ENCODE measurements at regions of chr16 and their contacts with region 1.

Region 1: DNA sequence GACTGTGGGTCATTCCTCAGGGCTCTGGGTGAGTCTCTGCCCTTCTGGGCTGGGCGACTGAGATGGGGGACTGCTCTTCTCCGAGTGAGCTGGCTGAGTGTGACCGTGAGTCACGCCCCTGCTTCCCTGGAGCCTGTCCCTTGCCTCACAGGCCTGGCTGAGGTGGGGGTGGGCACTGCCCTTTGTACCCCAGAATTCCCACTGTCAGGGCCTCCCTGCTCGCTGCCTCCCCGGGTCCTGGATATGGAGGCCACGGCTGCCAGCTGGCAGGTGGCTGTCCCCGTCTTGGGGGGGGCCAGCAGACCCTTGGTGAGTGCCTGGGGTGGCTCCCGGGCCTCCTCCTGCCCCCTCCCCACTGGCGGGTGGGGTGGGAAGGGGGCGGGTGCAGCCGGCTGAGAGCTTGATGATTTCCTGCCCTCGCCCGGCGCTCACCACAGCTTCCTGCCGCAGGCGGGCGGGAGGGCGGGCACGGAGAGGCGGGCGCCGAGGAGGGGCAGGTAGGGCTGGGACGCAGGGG is at the start of gene LAT:
- DNase-seq: peak; percentile 48
- CTCF ChIP-seq: no peak

Region 2: DNA sequence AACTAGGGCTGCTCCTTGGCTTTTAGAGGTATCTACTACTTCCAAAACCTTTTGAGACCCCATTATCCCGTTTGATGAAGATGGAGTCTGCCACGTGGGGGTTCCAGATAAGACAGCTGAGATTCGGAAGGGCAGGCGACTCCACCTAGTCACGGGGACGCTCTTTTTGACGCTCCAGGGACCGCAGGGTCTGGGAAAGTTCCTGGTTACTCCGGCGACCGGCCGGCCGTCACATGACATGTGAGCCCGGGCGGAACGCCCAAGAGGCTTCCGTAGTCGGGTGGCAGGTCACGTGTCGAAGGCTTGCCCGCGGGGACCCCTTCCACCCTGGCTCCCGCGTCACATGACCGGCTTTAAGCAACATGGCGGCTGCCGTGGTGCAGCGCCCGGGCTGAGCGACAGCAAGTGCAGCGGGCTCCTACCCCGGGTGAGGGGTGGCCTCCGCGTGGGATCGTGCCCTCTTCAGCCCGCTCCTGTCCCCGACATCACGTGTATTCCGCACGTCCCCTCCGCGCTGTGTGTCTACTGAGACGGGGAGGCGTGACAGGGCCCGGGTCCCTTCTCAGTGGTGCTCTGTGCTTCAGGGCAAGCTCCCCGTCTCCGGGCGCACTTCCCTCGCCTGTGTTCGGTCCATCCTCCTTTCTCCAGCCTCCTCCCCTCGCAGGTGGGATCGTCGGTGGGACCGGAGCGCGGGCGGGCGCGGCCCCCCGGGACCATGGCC is 10.1 kb before region 1 on chr16 and contains the start of gene SPNS1:
- CTCF ChIA-PET with region 1: interaction called, 16 read pairs
- POLR2A ChIA-PET with region 1: interaction called, 3 read pairs
- DNase-seq: peak; percentile 98
- CTCF ChIP-seq: no peak